A549 (cell line): ENCODE measurements at regions of chr9 and their contacts with region 1.

Region 1: DNA sequence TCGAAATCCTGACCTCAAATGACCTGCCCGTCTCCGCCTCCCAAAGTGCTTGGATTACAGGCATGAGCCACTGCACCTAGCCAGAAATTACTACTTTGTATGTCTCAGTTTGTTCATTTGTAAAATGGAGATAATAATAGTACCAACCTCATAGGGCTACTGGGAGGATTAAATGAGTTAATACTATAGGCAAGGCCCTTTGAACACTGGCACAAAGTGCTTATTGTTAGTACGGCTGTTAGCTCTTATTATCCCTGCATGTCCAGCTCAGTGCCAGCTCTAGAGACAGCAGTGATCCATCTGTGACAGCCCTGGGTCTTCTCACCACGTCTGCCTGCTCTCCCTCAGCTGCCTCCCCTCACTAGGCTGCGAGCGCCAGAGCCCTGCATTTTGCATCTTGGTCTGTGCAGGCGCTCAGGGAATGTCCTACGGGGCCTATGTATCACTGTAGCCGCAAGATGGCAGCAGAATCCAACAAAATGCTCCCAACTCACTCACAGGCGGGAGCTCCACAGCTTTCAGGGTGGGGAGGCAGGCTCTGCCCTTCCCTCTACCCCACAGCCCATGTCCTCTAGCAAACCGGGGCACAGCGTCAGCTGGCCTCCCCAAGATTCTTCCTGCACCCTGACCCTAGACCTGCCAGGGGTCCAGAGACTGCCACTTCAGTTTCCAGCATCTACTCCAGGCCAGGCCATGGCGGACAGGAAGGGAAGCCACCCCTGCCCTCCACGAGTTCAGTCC is 17.7 kb upstream of the AKNA start:
- DNase-seq: peak; percentile 78 to 90
- ATAC-seq: peak; percentile 87 to 98
- H3K4me3 ChIP-seq: no peak overlapping the region
- H3K27ac ChIP-seq: no peak overlapping the region
- H3K4me1 ChIP-seq: no peaks in the 10 kb centered on the region
- CTCF ChIP-seq: peak; percentile 84
- EP300 ChIP-seq: no peak
- POLR2A ChIP-seq: no peak
- RAD21 ChIP-seq: peak; percentile 93 to 95

Region 2: DNA sequence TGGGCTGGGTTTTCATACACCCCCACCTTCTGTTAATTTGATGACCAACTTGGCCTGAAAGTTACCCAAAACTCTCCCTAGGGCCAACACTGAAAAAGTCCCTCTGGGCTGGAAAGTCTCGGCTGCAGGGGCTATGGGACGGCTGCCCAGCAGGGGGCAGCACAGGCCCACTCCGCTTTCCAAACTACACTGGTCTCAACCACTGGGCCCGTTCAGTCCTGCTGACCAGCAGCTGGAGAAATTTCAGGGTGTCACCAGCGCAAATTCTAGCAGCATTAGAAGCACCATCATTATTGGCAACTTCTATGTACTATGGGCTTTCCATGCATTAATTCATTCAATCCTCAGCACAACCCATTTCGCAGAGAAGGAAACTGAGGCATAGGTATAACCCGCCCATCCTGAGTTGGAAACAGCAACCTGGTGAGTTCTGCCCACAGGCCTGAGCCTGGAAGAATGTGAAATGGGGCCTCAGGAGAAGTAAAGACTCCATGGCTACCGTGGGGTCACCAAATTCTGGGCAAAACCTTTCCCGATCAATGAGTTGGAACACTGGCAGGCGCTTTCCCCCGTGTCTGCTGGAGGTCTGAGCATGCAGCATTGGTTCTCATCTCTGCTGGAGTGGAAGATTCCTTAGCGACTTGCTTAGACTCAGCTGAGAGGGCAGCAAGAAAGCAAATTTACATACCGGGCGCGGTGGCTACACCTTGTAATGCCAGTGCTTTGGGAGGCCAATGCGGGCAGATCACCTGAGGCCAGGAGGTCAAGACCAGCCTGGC is 66.1 kb before region 1 on chr9:
- CTCF ChIA-PET with region 1: interaction called, 31 read pairs
- POLR2A ChIA-PET with region 1: no interaction called
- DNase-seq: peak; percentile 44 to 84
- ATAC-seq: peak; percentile 73 to 93
- H3K4me3 ChIP-seq: no peak overlapping the region
- H3K27ac ChIP-seq: no peak overlapping the region
- H3K4me1 ChIP-seq: no peaks in the 10 kb centered on the region
- CTCF ChIP-seq: peak; percentile 77
- EP300 ChIP-seq: no peak
- POLR2A ChIP-seq: no peak
- RAD21 ChIP-seq: peak; percentile 80 to 82

Region 3: DNA sequence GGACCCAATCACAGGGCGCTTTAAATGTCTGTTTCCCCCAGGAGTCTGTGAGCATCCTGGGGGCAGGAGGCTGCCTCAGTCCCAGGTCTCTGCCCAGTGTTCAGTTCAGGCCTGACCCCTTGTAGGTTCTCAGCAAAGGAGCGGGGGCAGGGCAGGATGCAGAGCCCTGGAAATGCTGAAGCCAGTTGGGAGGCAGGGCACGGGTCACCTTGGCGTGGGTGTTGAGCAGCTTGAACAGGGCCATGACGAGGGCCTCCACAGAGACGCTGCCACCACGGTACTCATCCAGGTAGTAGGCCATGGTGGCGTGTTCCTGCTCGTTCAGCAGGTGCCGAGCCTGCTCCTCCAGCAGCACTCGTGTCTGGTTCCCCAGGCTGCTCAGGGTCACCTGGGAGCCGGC is 18.7 kb after region 1 on chr9:
- CTCF ChIA-PET with region 1: interaction called, 106 read pairs
- POLR2A ChIA-PET with region 1: no interaction called
- DNase-seq: no peak
- ATAC-seq: no peak
- H3K4me3 ChIP-seq: no peak overlapping the region
- H3K27ac ChIP-seq: no peak overlapping the region
- H3K4me1 ChIP-seq: no peaks in the 10 kb centered on the region
- CTCF ChIP-seq: no peak
- EP300 ChIP-seq: no peak
- POLR2A ChIP-seq: no peak
- RAD21 ChIP-seq: no peak

Region 4: DNA sequence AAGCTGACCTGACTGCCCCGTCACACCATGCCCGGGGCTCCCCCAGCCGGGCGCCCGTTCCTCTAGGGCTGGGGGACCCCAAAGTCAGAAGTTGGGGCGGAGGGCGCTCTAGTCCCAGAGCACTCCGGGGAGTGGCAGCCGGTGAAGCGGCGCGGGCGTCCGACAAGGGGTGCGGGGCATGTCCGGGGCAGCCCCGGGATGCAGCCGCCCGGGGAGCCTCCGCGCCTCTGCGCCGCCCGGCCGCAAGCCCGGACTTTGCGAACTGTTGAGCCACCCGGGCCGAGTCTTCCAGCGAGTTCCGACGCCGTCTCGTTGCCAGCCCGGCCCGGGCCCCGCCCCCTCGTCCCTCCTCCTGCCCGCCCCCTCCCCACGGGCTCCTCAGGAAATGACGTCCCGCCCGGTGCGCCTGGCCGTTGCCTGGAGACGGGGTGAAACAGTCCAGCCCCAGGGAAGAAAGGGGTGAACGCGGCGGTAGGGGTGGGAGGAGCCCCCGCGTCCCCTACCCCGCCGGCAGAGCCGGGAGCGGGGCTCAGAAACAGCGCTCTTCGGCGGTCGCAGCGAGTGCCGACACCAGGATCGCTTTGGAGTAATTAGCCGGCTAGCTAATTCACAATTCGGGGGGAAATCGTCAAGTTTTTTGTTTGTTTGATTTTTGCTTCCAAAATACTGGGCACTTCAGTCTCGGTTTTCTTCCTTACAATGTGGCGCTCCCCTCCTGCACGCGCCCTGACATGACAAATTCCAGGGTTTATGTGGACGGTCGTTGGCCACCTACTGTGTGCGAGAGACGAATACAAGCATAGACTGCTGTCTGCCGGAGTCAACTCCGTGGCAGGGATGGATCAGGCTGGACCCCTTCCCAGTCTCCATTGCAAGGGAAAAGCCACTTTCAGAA is 100.0 kb after region 1 on chr9 and contains the start of gene WHRN:
- CTCF ChIA-PET with region 1: interaction called, 20 read pairs
- POLR2A ChIA-PET with region 1: no interaction called
- DNase-seq: peak; percentile 84 to 96
- ATAC-seq: peak; percentile 80 to 86
- H3K4me3 ChIP-seq: peak within 1 kb of the TSS; percentile 77
- H3K27ac ChIP-seq: peak within 1 kb of the TSS; percentile 65 to 88
- H3K4me1 ChIP-seq: peaks cover 27% of the 10 kb centered on the region
- CTCF ChIP-seq: no peak
- EP300 ChIP-seq: no peak
- POLR2A ChIP-seq: peak; percentile 47
- RAD21 ChIP-seq: 0 out of 5 replicates have a peak, but pooled peaks of 1 of the 2 experiments have one; percentile 10
- polyA plus RNA-seq, gene WHRN: 1.2 and 1.5 TPM in 2 replicates

Region 5: DNA sequence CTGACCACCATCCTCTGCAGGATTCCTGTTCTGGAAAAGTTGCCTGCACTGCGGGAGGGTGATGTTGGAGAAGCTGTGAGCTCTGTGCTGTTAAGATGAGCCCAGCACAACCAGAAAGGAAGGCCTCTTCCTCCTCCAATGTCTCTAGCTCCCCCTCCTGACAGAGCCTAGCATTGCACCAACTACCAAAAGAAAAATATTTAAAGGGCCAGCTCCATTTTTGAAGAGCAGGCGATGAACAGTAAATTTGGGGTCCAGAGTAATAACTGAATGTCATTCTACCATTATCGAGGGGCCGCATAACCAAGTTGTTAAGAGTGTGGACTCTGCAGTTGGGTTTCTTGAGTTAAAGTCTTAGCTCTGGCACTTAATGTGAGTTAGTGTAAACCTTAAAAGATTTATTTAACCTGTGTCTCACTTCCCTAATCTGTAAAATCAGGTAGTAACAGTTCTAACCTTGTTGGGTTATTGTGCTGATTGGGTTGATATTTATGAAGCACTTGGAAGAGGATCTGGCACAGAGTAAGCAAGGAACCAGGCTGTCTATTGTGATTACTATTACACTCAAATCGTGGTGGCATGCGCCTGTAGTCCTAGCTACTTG is 248.2 kb after region 1 on chr9:
- CTCF ChIA-PET with region 1: interaction called, 160 read pairs
- POLR2A ChIA-PET with region 1: interaction called, 5 read pairs
- DNase-seq: peak; percentile 64 to 72
- ATAC-seq: peak; percentile 62 to 88; a peak in 3 of 6 replicates
- H3K4me3 ChIP-seq: no peak overlapping the region
- H3K27ac ChIP-seq: peak overlapping the region in 1 of 2 experiments; percentile 43; a peak in 2 of 6 replicates
- H3K4me1 ChIP-seq: 0 out of 3 replicates have a peak, but pooled peaks cover 3% of the 10 kb centered on the region
- CTCF ChIP-seq: peak; percentile 91
- EP300 ChIP-seq: no peak
- POLR2A ChIP-seq: no peak
- RAD21 ChIP-seq: peak; percentile 89 to 97

Region 6: GRCh38 chr9:114681594-114682332 is 276.3 kb after region 1 on chr9 and contains the start of gene TEX48:
- CTCF ChIA-PET with region 1: interaction called, 27 read pairs
- POLR2A ChIA-PET with region 1: no interaction called
- DNase-seq: peak; percentile 66 to 88
- ATAC-seq: peak; percentile 80 to 87
- H3K4me3 ChIP-seq: no peak within 1 kb of the TSS
- H3K27ac ChIP-seq: peak within 1 kb of the TSS; percentile 9 to 48; a peak in 3 of 6 replicates
- H3K4me1 ChIP-seq: peaks cover 32% of the 10 kb centered on the region
- CTCF ChIP-seq: peak; percentile 61
- EP300 ChIP-seq: no peak
- POLR2A ChIP-seq: no peak
- RAD21 ChIP-seq: peak; percentile 76 to 92
- polyA plus RNA-seq, gene TEX48: 0.16 TPM in 1 of 2 replicates, not detected in the other